ENCODE measurements at regions of chr6 and their contacts with region 1.

Region 1: DNA sequence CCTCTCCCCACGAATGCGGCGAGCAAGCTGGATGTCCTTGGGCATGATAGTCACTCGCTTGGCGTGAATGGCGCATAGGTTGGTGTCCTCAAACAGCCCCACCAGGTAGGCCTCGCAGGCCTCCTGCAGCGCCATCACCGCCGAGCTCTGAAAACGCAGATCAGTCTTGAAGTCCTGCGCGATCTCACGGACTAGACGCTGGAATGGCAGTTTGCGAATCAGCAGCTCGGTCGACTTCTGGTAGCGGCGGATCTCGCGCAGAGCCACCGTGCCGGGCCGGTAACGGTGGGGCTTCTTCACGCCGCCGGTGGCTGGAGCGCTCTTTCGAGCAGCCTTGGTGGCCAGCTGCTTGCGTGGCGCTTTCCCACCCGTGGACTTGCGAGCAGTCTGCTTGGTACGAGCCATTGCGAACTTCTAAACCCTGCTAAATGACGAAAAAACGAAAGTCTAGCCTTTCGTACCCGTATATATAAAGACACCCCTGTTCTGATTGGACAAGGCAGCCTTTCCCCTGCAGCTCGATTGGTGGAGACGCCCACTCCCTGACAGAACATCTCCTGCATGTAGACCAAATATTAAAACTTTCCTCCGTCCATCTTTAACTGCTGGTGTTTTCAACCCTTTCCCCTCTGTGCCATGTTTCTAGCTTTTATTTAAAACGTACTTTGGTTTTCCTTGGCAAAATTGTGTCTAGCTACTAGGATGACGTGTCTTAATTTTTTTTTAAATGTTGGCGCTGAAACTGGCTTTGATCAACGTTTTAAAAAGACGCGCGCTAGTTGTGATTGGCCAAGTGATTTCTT is 109.8 kb downstream of the HFE start:
- DNase-seq: peak; percentile 92 to 93 (median 92)
- H3K4me3 ChIP-seq: peak overlapping the region; percentile 83 to 97
- H3K4me3 Mint-ChIP-seq: peak overlapping the region; percentile 94 to 99 (median 97)
- H3K27ac ChIP-seq: peak overlapping the region; percentile 84
- H3K27ac Mint-ChIP-seq: peak overlapping the region; percentile 96 to 100 (median 98)
- H3K4me1 ChIP-seq: peaks cover 43% of the 10 kb centered on the region
- H3K4me1 Mint-ChIP-seq: peaks cover 23 to 57% (median 41%) of the 10 kb centered on the region in 4 donors
- H3K27me3 ChIP-seq: no peaks in the 10 kb centered on the region
- H3K27me3 Mint-ChIP-seq: no peaks in the 10 kb centered on the region

Region 2: GRCh38 chr6:26031595-26032339 is 165.3 kb before region 1 on chr6:
- CTCF ChIA-PET with region 1: interaction called, 4 read pairs
- POLR2A ChIA-PET with region 1: interaction called, 100 read pairs
- intact Hi-C with region 1: loop called (anchors 2 kb)
- DNase-seq: peak; percentile 86 to 94 (median 89)
- H3K4me3 ChIP-seq: peak overlapping the region; percentile 53 to 67
- H3K4me3 Mint-ChIP-seq: peak overlapping the region; percentile 91 to 99 (median 94)
- H3K27ac ChIP-seq: peak overlapping the region; percentile 71
- H3K27ac Mint-ChIP-seq: peak overlapping the region; percentile 89 to 98 (median 96)
- H3K4me1 ChIP-seq: peaks cover 35% of the 10 kb centered on the region
- H3K4me1 Mint-ChIP-seq: peaks cover 33 to 54% (median 44%) of the 10 kb centered on the region in 4 donors
- H3K27me3 ChIP-seq: no peaks in the 10 kb centered on the region
- H3K27me3 Mint-ChIP-seq: peaks cover 0 to 3% of the 10 kb centered on the region in 2 donors

Region 3: GRCh38 chr6:26175428-26176181 is 21.4 kb before region 1 on chr6:
- CTCF ChIA-PET with region 1: interaction called, 49 read pairs
- POLR2A ChIA-PET with region 1: interaction called, 2,476 read pairs
- intact Hi-C with region 1: loop called (anchors 1 kb)
- DNase-seq: peak; percentile 50 to 73 (median 70)
- H3K4me3 ChIP-seq: no peak overlapping the region
- H3K4me3 Mint-ChIP-seq: peak overlapping the region in 4 of 8 donors; percentile 37 to 70 (median 65)
- H3K27ac ChIP-seq: no peak overlapping the region
- H3K27ac Mint-ChIP-seq: peak overlapping the region; percentile 28 to 89 (median 78)
- H3K4me1 ChIP-seq: peaks cover 37% of the 10 kb centered on the region
- H3K4me1 Mint-ChIP-seq: peaks cover 21 to 40% (median 27%) of the 10 kb centered on the region in 4 donors
- H3K27me3 ChIP-seq: no peaks in the 10 kb centered on the region
- H3K27me3 Mint-ChIP-seq: no peaks in the 10 kb centered on the region

Region 4: GRCh38 chr6:26240154-26241032 is 43.3 kb after region 1 on chr6:
- CTCF ChIA-PET with region 1: interaction called, 16 read pairs
- POLR2A ChIA-PET with region 1: interaction called, 502 read pairs
- intact Hi-C with region 1: no loop called
- DNase-seq: peak; percentile 79 to 86 (median 82)
- H3K4me3 ChIP-seq: peak overlapping the region; percentile 66 to 67
- H3K4me3 Mint-ChIP-seq: peak overlapping the region; percentile 80 to 93 (median 87)
- H3K27ac ChIP-seq: peak overlapping the region; percentile 81
- H3K27ac Mint-ChIP-seq: peak overlapping the region; percentile 89 to 99 (median 95)
- H3K4me1 ChIP-seq: peaks cover 11% of the 10 kb centered on the region
- H3K4me1 Mint-ChIP-seq: peaks cover 9 to 29% (median 15%) of the 10 kb centered on the region in 4 donors
- H3K27me3 ChIP-seq: no peaks in the 10 kb centered on the region
- H3K27me3 Mint-ChIP-seq: no peaks in the 10 kb centered on the region

Region 5: GRCh38 chr6:26322645-26323482 is 125.8 kb after region 1 on chr6:
- CTCF ChIA-PET with region 1: no interaction called
- POLR2A ChIA-PET with region 1: interaction called, 28 read pairs
- intact Hi-C with region 1: no loop called
- DNase-seq: peak; percentile 75 to 80 (median 79)
- H3K4me3 ChIP-seq: peak overlapping the region in 1 of 2 donors; percentile 62
- H3K4me3 Mint-ChIP-seq: peak overlapping the region; percentile 86 to 92 (median 88)
- H3K27ac ChIP-seq: no peak overlapping the region
- H3K27ac Mint-ChIP-seq: peak overlapping the region; percentile 42 to 98 (median 82)
- H3K4me1 ChIP-seq: peaks cover 12% of the 10 kb centered on the region
- H3K4me1 Mint-ChIP-seq: peaks cover 19 to 30% (median 24%) of the 10 kb centered on the region in 4 donors
- H3K27me3 ChIP-seq: no peaks in the 10 kb centered on the region
- H3K27me3 Mint-ChIP-seq: peaks cover 8 to 22% of the 10 kb centered on the region in 2 donors

Region 6: GRCh38 chr6:27871924-27872638 is 1675.0 kb after region 1 on chr6:
- CTCF ChIA-PET with region 1: no interaction called
- POLR2A ChIA-PET with region 1: interaction called, 41 read pairs
- intact Hi-C with region 1: no loop called
- DNase-seq: peak; percentile 91 to 96 (median 94)
- H3K4me3 ChIP-seq: peak overlapping the region; percentile 77 to 89
- H3K4me3 Mint-ChIP-seq: peak overlapping the region; percentile 87 to 94 (median 90)
- H3K27ac ChIP-seq: peak overlapping the region; percentile 86
- H3K27ac Mint-ChIP-seq: peak overlapping the region; percentile 89 to 97 (median 94)
- H3K4me1 ChIP-seq: peaks cover 33% of the 10 kb centered on the region
- H3K4me1 Mint-ChIP-seq: peaks cover 24 to 48% (median 33%) of the 10 kb centered on the region in 4 donors
- H3K27me3 ChIP-seq: no peaks in the 10 kb centered on the region
- H3K27me3 Mint-ChIP-seq: no peaks in the 10 kb centered on the region

Measured in CD4-positive, alpha-beta memory T cell (primary cell).